ENCODE measurements at regions of chr1 and their contacts with region 1.

Region 1: DNA sequence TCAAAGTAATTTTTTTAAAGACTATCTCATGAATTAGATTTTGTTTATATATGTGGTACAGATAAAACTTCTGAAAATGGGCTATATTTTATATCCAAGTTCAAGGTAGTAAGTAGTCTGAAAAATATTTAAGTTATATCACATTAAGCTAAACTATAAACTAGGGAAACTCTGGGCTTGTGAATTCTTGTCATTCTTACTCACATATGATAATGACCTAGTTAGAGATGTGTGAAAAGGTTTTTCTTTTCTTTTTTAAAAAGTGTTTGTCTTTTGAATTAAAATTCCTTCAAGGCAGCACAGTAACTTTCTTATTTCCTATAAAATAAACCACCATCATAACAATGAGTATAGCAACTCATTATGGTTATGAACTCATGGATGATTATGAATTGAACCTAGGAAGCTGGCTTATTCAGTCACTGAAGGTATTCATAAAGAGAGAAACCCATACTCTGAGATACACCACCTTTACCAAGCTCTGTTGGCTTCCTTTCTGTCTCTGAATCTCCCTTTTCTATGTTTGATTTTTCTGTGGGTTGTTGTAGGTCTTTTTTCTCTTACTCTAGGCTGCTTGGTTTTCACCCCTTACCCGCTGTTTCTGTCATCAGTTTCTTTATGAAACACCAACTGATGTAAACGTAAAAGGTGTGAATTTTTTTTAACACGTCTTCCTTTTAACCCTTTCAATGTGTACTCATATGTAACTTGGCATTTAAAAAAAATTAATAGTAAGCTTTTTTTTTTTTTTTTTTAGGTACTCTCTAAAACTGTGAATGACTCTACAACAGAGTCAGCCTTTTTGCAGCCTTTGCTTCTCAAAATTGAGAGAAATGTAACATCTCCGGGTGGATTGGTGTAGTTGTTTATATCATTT is 25.2 kb downstream of the IL12RB2 start:
- DNase-seq: peak; percentile 67
- H3K4me3 Mint-ChIP-seq: no peak overlapping the region
- H3K27ac Mint-ChIP-seq: peak overlapping the region; percentile 97
- H3K4me1 Mint-ChIP-seq: peaks cover 79% of the 10 kb centered on the region
- H3K27me3 Mint-ChIP-seq: no peaks in the 10 kb centered on the region

Region 2: DNA sequence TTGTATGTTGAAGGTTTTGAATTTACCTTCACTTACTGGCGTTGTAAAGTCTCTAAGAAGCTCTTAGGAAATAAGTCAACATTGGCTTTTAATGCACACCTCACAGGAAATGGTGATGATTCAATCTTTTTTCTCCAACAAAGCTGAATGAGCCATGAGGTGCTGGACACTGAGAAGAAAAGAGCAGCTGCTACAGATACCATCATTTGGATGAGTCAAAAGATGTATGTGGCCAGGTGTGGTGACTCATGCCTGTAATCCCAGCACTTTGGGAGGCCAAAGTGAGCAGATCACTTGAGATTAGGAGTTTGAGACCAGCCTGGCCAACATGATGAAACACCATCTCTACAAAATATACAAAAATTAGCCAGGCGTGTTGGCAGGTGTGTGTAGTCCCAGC is 169.9 kb before region 1 on chr1:
- CTCF ChIA-PET with region 1: interaction called, 4 read pairs
- intact Hi-C with region 1: loop called (anchors 1 kb)
- DNase-seq: peak; percentile 76
- H3K4me3 Mint-ChIP-seq: peak overlapping the region; percentile 42
- H3K27ac Mint-ChIP-seq: peak overlapping the region; percentile 83
- H3K4me1 Mint-ChIP-seq: peaks cover 63% of the 10 kb centered on the region
- H3K27me3 Mint-ChIP-seq: no peaks in the 10 kb centered on the region

Region 3: GRCh38 chr1:67214420-67215174 is 118.3 kb before region 1 on chr1:
- CTCF ChIA-PET with region 1: interaction called, 20 read pairs
- intact Hi-C with region 1: no loop called
- DNase-seq: peak; percentile 82
- H3K4me3 Mint-ChIP-seq: no peak overlapping the region
- H3K27ac Mint-ChIP-seq: peak overlapping the region; percentile 74
- H3K4me1 Mint-ChIP-seq: peaks cover 64% of the 10 kb centered on the region
- H3K27me3 Mint-ChIP-seq: no peaks in the 10 kb centered on the region

Region 4: DNA sequence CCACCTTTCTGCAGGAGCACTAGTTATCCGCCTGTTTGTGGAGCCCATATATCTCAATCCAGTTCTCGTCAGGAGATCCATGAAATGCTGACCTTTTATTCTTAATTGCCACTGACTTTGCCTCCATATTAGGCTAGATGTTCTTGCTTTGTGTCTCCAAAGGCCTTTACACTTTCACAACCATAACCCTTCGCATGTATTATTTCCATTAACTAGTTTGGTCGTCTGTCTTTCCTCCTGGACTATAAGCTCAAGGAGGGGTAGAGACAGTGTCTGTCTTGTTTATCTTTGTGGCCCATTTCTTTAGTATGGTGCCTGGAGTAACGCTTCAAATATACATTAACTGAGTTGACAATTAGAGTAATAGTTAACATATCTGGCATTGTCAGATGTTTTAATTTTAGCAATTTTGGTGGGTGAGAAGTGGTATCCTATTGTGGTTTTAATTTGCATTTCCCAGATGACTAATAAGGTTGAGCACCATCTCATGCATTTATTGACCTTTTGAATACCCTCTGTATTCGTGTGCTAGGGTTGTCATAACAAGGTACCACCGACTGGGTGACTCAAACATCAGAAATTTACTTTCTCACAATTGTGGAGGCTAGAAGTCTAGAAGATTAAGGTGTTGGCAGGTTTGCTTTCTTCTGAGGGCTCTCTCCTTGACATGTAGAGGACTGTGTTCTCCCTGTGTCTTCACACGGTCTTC is 47.0 kb before region 1 on chr1:
- CTCF ChIA-PET with region 1: interaction called, 4 read pairs
- intact Hi-C with region 1: loop called (anchors 1 kb)
- DNase-seq: peak; percentile 55
- H3K4me3 Mint-ChIP-seq: no peak overlapping the region
- H3K27ac Mint-ChIP-seq: peak overlapping the region; percentile 65
- H3K4me1 Mint-ChIP-seq: peaks cover 52% of the 10 kb centered on the region
- H3K27me3 Mint-ChIP-seq: no peaks in the 10 kb centered on the region

Region 5: DNA sequence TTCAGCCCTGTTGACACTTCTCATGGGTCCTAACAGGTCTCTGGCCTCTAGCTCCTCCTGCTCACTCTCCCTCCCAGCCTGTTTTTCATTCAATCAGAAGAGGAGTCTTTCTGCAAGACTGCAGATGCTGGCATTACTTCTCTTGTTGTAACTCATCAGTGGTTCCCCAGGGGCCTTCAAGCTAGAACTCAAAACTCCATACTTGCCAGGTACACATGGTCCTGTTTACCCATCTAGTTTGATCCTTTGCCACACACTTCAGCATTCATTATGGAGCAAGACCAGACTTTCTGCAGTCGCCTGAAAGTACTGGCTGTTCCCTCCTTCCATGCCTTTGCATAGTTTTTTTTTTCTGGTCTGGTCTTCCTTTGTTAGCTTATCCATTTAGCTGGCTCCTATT is 49.4 kb after region 1 on chr1:
- CTCF ChIA-PET with region 1: no interaction called
- intact Hi-C with region 1: no loop called
- DNase-seq: no peak
- H3K4me3 Mint-ChIP-seq: no peak overlapping the region
- H3K27ac Mint-ChIP-seq: no peak overlapping the region
- H3K4me1 Mint-ChIP-seq: no peaks in the 10 kb centered on the region
- H3K27me3 Mint-ChIP-seq: no peaks in the 10 kb centered on the region

Region 6: DNA sequence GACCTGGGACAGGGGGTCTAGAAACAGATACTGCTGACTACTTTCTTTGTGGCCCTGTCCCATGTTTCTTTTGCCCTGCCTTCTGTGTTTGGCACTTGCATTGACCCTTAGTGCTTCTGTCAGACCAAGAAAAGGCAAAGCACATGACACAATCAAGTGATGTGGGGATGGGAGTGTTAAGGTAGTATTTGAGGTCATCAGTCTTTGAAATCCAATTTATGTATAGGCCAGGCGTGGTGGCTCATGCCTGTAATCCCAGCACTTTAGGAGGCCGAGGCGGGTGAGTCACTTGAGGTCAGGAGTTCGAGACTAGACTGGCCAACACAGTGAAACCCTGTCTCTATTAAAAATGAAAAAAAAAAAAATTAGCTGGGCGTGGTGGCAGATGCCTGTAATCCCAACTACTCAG is 71.3 kb after region 1 on chr1:
- CTCF ChIA-PET with region 1: no interaction called
- intact Hi-C with region 1: loop called (anchors 1 kb)
- DNase-seq: no peak
- H3K4me3 Mint-ChIP-seq: no peak overlapping the region
- H3K27ac Mint-ChIP-seq: peak overlapping the region; percentile 50
- H3K4me1 Mint-ChIP-seq: peaks cover 19% of the 10 kb centered on the region
- H3K27me3 Mint-ChIP-seq: no peaks in the 10 kb centered on the region

Region 7: GRCh38 chr1:67723620-67724019 is 390.7 kb after region 1 on chr1:
- CTCF ChIA-PET with region 1: no interaction called
- intact Hi-C with region 1: loop called (anchors 1 kb)
- DNase-seq: peak; percentile 58
- H3K4me3 Mint-ChIP-seq: no peak overlapping the region
- H3K27ac Mint-ChIP-seq: no peak overlapping the region
- H3K4me1 Mint-ChIP-seq: peaks cover 8% of the 10 kb centered on the region
- H3K27me3 Mint-ChIP-seq: no peaks in the 10 kb centered on the region